Sciatic nerve (tissue), 2 donors: ENCODE measurements at regions of chr5 and their contacts with region 1.

Region 1: GRCh38 chr5:52469420-52469819 is 318.3 kb upstream of the ITGA1 start:
- DNase-seq: no peak
- ATAC-seq: peak; percentile 79

Region 2: GRCh38 chr5:52491818-52492217 is 22.4 kb after region 1 on chr5:
- intact Hi-C with region 1: loop called (anchors 2 kb)
- DNase-seq: no peak
- ATAC-seq: no peak